ENCODE measurements at regions of chr14 and their contacts with region 1.

Region 1: DNA sequence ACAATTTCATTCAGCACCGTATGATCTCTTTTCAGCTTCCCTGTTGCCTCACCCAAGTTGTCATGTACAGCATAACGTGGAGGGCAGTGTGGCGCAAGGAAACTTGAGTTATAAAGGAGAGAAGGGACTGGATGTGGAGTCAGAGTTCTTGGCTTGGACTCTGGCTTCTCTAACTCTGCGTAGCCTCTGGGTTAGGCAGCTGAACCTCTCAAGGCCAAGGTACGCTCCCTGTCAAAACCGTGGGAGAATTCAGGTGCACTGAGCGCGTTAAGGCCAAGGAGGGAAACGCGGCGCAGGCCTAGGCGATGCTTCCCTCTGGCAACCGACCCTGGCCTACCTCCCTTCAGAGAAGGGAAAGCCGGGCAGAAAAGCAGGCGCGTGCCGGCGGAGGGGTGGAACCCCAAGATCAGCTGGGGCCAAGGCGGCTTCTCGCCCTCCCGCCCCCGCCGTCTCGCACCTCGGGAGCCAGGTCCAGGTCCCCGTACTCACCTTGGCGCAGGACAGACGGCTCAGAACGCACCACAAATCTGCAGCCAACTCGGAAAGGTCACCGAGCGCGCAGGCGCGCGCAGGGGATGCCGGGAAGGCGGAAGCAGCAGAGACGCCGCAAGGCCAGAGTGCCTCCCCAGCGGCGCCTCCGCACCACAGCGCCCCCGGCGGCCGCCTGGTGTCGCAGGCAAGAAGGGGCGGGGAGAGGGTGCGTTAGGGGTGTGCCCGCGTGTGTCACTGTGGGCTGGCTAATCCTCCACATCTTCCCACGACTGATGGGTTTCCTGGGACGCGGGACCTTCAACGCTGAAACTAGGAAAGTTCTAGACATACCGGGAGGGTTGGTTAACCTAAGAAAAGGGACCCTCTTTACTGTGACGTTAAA is 7.0 kb upstream of the TDRD9 start:
- DNase-seq: peak; percentile 95
- H3K4me3 Mint-ChIP-seq: peak overlapping the region; percentile 96
- H3K27ac Mint-ChIP-seq: peak overlapping the region; percentile 81
- H3K4me1 Mint-ChIP-seq: peaks cover 5% of the 10 kb centered on the region
- H3K27me3 Mint-ChIP-seq: peaks cover 12% of the 10 kb centered on the region

Region 2: DNA sequence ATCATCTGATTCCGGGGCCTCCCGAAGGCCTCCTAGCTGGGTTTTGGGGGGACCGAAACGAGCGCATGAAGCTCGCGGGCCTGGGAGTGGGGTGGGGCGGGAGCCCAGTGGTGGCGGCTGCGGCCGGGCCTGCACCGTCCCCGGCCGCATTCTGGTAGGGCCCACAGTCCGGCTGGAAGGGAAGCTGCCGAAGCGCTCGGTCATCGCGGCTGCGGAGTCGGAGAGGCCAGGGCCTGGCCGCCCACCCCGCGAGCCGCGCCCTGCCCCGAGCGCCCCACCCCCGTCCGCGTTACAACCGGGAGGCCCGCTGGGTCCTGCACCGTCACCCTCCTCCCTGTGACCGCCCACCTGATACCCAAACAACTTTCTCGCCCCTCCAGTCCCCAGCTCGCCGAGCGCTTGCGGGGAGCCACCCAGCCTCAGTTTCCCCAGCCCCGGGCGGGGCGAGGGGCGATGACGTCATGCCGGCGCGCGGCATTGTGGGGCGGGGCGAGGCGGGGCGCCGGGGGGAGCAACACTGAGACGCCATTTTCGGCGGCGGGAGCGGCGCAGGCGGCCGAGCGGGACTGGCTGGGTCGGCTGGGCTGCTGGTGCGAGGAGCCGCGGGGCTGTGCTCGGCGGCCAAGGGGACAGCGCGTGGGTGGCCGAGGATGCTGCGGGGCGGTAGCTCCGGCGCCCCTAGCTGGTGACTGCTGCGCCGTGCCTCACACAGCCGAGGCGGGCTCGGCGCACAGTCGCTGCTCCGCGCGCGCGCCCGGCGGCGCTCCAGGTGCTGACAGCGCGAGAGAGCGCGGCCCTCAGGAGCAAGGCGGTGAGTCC is 292.3 kb before region 1 on chr14 and contains the start of gene KLC1:
- intact Hi-C with region 1: loop called (anchors 2 kb)
- DNase-seq: peak; percentile 78
- H3K4me3 Mint-ChIP-seq: peak within 1 kb of the TSS; percentile 89
- H3K27ac Mint-ChIP-seq: peak within 1 kb of the TSS; percentile 86
- H3K4me1 Mint-ChIP-seq: peaks cover 14% of the 10 kb centered on the region
- H3K27me3 Mint-ChIP-seq: no peaks in the 10 kb centered on the region
- total RNA-seq, gene KLC1: 148 and 150 TPM in 2 replicates

Region 3: GRCh38 chr14:103847451-103848188 is 73.6 kb before region 1 on chr14 and contains the start of gene PPP1R13B:
- intact Hi-C with region 1: loop called (anchors 1 kb)
- DNase-seq: peak; percentile 87
- H3K4me3 Mint-ChIP-seq: peak within 1 kb of the TSS; percentile 85
- H3K27ac Mint-ChIP-seq: peak within 1 kb of the TSS; percentile 51
- H3K4me1 Mint-ChIP-seq: peaks cover 15% of the 10 kb centered on the region
- H3K27me3 Mint-ChIP-seq: peaks cover 20% of the 10 kb centered on the region
- total RNA-seq, gene PPP1R13B: 9.6 and 9.8 TPM in 2 replicates

Region 4: GRCh38 chr14:103862393-103862782 is 58.8 kb before region 1 on chr14:
- intact Hi-C with region 1: no loop called
- DNase-seq: no peak
- H3K4me3 Mint-ChIP-seq: no peak overlapping the region
- H3K27ac Mint-ChIP-seq: no peak overlapping the region
- H3K4me1 Mint-ChIP-seq: no peaks in the 10 kb centered on the region
- H3K27me3 Mint-ChIP-seq: peaks cover 7% of the 10 kb centered on the region

Region 5: DNA sequence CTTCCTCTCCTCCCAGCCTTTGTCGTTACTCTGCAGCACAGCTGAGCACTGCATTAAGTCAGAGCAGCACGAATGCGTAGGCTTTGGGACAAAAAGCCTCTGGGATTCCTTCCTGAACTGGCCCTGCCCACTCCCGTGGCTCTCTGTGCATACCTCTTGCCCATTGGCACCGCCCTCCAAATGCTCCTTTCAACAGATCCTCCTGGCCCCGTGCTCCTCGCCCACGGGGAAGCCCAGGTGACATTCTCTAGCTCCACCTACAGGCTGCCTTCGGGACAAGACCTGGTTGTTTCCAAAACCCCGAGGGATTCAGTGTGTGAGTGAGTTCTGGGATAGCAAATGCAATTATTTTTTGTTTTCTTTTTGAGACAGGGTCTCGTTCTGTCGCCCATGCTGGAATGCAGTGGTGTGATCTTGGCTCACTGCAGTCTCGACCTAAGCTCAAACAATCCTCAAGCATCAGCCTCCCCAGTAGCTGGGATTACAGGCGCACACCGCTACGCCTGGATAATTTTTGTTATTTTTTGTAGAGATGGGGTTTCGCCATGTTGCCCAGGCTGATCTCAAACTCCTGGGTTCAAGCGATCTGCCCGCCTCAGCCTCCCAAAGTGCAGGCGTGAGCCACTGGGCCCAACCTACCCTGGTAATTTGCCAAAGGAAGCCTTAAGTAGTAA is 10.8 kb before region 1 on chr14:
- intact Hi-C with region 1: loop called (anchors 1 kb)
- DNase-seq: peak; percentile 56
- H3K4me3 Mint-ChIP-seq: peak overlapping the region; percentile 16
- H3K27ac Mint-ChIP-seq: peak overlapping the region; percentile 68
- H3K4me1 Mint-ChIP-seq: peaks cover 21% of the 10 kb centered on the region
- H3K27me3 Mint-ChIP-seq: no peaks in the 10 kb centered on the region

Region 6: GRCh38 chr14:103932791-103933490 is 11.7 kb after region 1 on chr14:
- intact Hi-C with region 1: no loop called
- DNase-seq: no peak
- H3K4me3 Mint-ChIP-seq: no peak overlapping the region
- H3K27ac Mint-ChIP-seq: no peak overlapping the region
- H3K4me1 Mint-ChIP-seq: no peaks in the 10 kb centered on the region
- H3K27me3 Mint-ChIP-seq: peaks cover 12% of the 10 kb centered on the region

Region 7: GRCh38 chr14:104040539-104040938 is 119.3 kb after region 1 on chr14:
- intact Hi-C with region 1: no loop called
- DNase-seq: no peak
- H3K4me3 Mint-ChIP-seq: no peak overlapping the region
- H3K27ac Mint-ChIP-seq: no peak overlapping the region
- H3K4me1 Mint-ChIP-seq: no peaks in the 10 kb centered on the region
- H3K27me3 Mint-ChIP-seq: peaks cover 3% of the 10 kb centered on the region